CD8-positive, alpha-beta memory T cell (primary cell): ENCODE measurements at regions of chr13 and their contacts with region 1.

Region 1: GRCh38 chr13:26688286-26688685 is 72.3 kb downstream of the GPR12 start:
- DNase-seq: no peak
- H3K4me3 ChIP-seq: no peak overlapping the region
- H3K4me3 Mint-ChIP-seq: no peak overlapping the region
- H3K27ac ChIP-seq: no peak overlapping the region
- H3K27ac Mint-ChIP-seq: no peak overlapping the region
- H3K4me1 ChIP-seq: no peaks in the 10 kb centered on the region
- H3K4me1 Mint-ChIP-seq: no peaks in the 10 kb centered on the region
- H3K27me3 ChIP-seq: no peaks in the 10 kb centered on the region
- H3K27me3 Mint-ChIP-seq: peaks cover 6 to 29% of the 10 kb centered on the region in 2 donors

Region 2: DNA sequence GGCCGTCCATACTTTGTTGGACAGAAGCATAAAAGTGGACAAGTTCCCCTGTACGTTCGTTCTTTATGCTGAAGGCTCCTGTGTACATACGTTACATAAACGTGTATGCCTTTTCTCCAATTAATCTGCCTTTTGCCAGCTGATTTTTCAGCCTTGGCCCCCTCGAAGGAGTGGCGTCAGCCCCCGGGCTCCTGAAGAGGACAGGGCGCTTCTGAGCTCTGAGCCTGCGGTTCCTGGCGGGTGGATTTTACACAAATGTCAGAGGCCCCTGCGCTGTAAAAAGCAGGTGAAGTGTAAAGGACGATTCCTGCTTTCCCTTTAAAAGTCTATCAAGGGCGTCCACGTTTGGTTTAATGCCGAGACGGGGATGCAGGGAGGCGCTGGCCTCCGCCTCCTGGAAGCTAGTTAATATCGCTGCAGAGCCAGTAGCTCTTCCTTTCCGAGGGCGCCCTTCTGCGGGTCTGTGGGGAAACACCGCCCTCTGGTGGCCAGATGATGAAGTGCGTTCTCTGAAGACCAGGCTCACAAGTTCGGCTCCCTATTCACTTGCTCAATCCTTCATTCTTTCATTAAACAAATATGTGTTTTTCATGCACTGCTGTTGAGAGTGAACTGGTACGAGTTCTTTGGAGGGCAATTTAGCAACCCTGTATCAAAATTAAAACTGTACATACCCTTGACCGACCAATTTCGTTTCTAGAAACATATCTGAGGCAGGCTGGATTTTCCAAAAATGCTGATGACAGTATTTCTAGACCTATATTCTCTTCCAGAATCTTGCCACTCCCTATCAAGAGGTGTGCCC is 10.3 kb after region 1 on chr13:
- CTCF ChIA-PET with region 1: interaction called, 10 read pairs
- POLR2A ChIA-PET with region 1: no interaction called
- DNase-seq: peak; percentile 66 to 81 (median 68)
- H3K4me3 ChIP-seq: no peak overlapping the region
- H3K4me3 Mint-ChIP-seq: peak overlapping the region in 1 of 7 donors; percentile 27
- H3K27ac ChIP-seq: no peak overlapping the region
- H3K27ac Mint-ChIP-seq: no peak overlapping the region
- H3K4me1 ChIP-seq: no peaks in the 10 kb centered on the region
- H3K4me1 Mint-ChIP-seq: peaks cover 6 to 9% (median 6%) of the 10 kb centered on the region in 3 donors
- H3K27me3 ChIP-seq: no peaks in the 10 kb centered on the region
- H3K27me3 Mint-ChIP-seq: peaks cover 7 to 20% of the 10 kb centered on the region in 2 donors

Region 3: DNA sequence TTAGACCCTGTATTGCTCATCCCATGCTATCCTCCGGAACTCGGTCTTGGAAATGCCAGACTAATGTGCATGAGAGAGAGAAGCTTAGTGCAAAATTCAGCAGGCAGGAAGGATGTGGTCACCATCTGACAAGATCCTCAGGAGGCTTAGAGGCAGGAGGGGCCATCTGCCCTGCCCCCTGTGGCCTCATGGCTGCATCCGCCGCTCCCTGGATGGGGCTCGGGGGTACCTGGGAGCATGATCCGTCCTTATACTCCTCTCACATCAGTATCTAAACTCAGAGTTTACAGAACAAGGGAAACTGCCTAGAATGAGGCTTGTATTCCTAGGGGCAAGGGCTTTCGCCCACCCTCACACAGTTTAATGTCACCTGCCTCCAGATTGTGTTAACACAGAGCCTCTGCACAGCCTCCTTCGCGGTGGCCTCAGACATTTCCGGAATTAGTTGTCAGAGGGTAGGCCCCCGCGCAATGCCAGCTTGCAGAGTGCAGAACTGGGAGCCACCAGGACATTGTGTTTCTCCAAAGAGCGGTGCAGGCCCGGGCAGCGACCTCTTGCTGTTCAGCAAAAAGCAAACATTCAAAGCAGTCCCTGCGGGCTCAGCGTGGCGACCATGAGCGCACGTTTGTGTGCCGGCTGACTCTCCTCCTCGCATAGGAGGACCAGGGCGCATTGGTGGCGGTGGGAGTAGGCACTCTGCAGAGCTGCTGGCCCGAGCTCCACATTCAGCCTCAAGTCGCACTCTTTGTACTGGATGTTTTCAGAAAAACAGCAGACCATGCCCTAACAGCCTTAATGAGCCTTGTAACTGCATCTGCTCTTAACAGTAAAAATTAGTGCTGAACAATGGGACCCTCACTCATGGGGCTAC is 33.2 kb after region 1 on chr13:
- CTCF ChIA-PET with region 1: no interaction called
- POLR2A ChIA-PET with region 1: no interaction called
- DNase-seq: peak in 4 of 5 donors; percentile 3 to 44 (median 28)
- H3K4me3 ChIP-seq: peak overlapping the region; percentile 48
- H3K4me3 Mint-ChIP-seq: peak overlapping the region; percentile 64 to 91 (median 87)
- H3K27ac ChIP-seq: no peak overlapping the region
- H3K27ac Mint-ChIP-seq: peak overlapping the region; percentile 45 to 95 (median 76)
- H3K4me1 ChIP-seq: peaks cover 23% of the 10 kb centered on the region
- H3K4me1 Mint-ChIP-seq: peaks cover 27 to 35% (median 33%) of the 10 kb centered on the region in 3 donors
- H3K27me3 ChIP-seq: no peaks in the 10 kb centered on the region
- H3K27me3 Mint-ChIP-seq: no peaks in the 10 kb centered on the region

Region 4: DNA sequence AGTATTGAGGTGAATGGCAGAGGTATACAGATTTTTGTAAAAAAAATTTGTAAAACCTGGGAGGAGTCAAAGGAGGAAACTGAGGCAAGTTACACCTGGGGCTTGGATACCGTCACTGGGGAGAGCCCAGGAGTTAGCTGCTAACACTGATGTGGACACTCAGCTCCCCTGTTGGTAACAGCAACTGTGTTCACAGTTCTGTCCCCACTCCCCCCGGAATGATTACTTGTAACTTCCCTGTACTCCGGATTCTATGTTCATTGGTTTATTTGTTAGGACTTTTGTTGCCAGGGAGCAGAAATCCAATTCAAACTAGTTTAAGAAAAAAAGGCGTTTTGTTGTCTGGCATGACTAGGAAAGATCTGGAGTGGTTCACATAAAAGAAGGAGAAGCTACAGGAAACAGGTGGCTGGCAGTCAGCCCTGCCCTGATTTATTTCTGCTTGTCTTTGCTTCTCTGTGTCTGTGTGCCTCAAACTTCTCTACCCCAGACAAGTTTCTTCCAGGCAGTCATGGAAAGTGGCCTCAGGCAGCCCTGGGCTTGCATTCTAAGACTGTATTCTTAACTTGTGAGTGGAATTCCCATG is 74.6 kb after region 1 on chr13:
- CTCF ChIA-PET with region 1: no interaction called
- POLR2A ChIA-PET with region 1: no interaction called
- DNase-seq: no peak
- H3K4me3 ChIP-seq: no peak overlapping the region
- H3K4me3 Mint-ChIP-seq: peak overlapping the region in 1 of 7 donors; percentile 20
- H3K27ac ChIP-seq: no peak overlapping the region
- H3K27ac Mint-ChIP-seq: peak overlapping the region in 1 of 8 donors; percentile 39
- H3K4me1 ChIP-seq: peaks cover 4% of the 10 kb centered on the region
- H3K4me1 Mint-ChIP-seq: peaks cover 17 to 28% (median 17%) of the 10 kb centered on the region in 3 donors
- H3K27me3 ChIP-seq: peaks cover 15% of the 10 kb centered on the region
- H3K27me3 Mint-ChIP-seq: peaks cover 35 to 74% of the 10 kb centered on the region in 2 donors